CD4-positive, alpha-beta T cell (primary cell): ENCODE measurements at regions of chr5 and their contacts with region 1.

Region 1: DNA sequence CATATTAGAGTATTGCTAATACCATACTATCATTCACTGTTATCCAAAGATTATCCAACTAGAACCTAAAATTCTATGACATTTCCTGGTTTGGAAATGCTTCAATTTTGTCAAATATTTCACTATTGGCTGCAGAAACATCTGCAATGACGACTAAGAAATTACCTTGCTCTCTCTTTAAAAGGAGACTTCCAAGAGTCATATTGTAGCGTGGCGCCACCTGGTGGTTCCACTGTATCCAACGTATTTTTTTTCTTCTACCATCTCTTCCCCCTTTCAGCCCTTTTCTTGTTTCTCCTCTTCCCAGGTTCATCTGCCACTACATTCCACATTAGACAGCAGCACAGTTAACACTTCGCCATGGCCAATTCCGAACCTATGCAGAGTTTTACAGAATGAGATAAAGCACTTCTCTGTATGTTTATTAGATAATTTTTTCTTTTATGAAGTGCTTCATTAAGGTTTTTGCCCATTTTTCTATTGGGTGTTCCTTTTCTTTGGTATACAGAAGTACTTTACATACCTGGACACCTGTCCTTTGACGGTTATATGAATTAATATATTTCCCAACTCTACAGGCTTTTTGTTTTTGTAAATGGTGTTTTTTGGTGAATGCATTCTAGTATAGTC is 153.5 kb downstream of the CDC42SE2 start:
- DNase-seq: peak; percentile 73 to 93 (median 82)
- ATAC-seq: peak; percentile 30
- H3K4me3 ChIP-seq: no peak overlapping the region
- H3K4me3 Mint-ChIP-seq: peak overlapping the region; percentile 6
- H3K27ac ChIP-seq: no peak overlapping the region
- H3K27ac Mint-ChIP-seq: peak overlapping the region; percentile 70
- H3K4me1 ChIP-seq: peaks cover 18% of the 10 kb centered on the region
- H3K4me1 Mint-ChIP-seq: peaks cover 50% of the 10 kb centered on the region
- H3K27me3 ChIP-seq: no peaks in the 10 kb centered on the region
- H3K27me3 Mint-ChIP-seq: no peaks in the 10 kb centered on the region
- CTCF ChIP-seq: peak; percentile 92

Region 2: DNA sequence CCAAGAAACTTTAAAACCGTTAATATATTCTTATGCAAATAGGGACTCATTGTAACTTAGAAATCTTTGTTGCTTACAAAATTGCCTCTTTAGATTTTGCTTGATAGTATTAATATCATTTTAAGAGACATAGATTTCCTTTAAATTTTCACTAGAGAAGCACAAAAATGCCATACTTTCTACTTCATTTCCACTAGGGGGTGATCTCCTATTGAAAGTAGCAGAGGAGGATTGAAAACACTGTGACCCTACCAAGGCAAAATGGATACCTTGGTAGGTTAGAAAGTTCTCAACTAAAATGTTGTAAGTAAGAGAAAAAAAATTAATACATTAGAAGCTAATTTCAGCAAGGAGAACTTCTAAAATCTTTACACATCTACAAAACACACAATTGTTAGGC is 1308.2 kb before region 1 on chr5:
- CTCF ChIA-PET with region 1: no interaction called
- POLR2A ChIA-PET with region 1: no interaction called
- intact Hi-C with region 1: loop called (anchors 2 to 5 kb)
- DNase-seq: peak in 3 of 14 experiments; percentile 19 to 26 (median 19)
- ATAC-seq: no peak
- H3K4me3 ChIP-seq: no peak overlapping the region
- H3K4me3 Mint-ChIP-seq: no peak overlapping the region
- H3K27ac ChIP-seq: no peak overlapping the region
- H3K27ac Mint-ChIP-seq: no peak overlapping the region
- H3K4me1 ChIP-seq: no peaks in the 10 kb centered on the region
- H3K4me1 Mint-ChIP-seq: no peaks in the 10 kb centered on the region
- H3K27me3 ChIP-seq: no peaks in the 10 kb centered on the region
- H3K27me3 Mint-ChIP-seq: peaks cover 12% of the 10 kb centered on the region
- CTCF ChIP-seq: peak; percentile 45

Region 3: GRCh38 chr5:130871346-130872086 is 545.8 kb before region 1 on chr5:
- CTCF ChIA-PET with region 1: no interaction called
- POLR2A ChIA-PET with region 1: no interaction called
- intact Hi-C with region 1: loop called in 1 of 2 experiments (anchors 2 kb)
- DNase-seq: peak in 13 of 14 experiments; percentile 5 to 73 (median 22)
- ATAC-seq: no peak
- H3K4me3 ChIP-seq: no peak overlapping the region
- H3K4me3 Mint-ChIP-seq: no peak overlapping the region
- H3K27ac ChIP-seq: no peak overlapping the region
- H3K27ac Mint-ChIP-seq: no peak overlapping the region
- H3K4me1 ChIP-seq: no peaks in the 10 kb centered on the region
- H3K4me1 Mint-ChIP-seq: no peaks in the 10 kb centered on the region
- H3K27me3 ChIP-seq: no peaks in the 10 kb centered on the region
- H3K27me3 Mint-ChIP-seq: no peaks in the 10 kb centered on the region
- CTCF ChIP-seq: peak; percentile 77

Region 4: GRCh38 chr5:131165119-131165727 is 252.1 kb before region 1 on chr5 and contains the start of gene HINT1:
- CTCF ChIA-PET with region 1: interaction called, 4 read pairs
- POLR2A ChIA-PET with region 1: interaction called, 4 read pairs
- intact Hi-C with region 1: loop called (anchors 1 to 2 kb)
- DNase-seq: peak; percentile 81 to 97 (median 92)
- ATAC-seq: peak; percentile 84
- H3K4me3 ChIP-seq: peak within 1 kb of the TSS; percentile 86
- H3K4me3 Mint-ChIP-seq: peak within 1 kb of the TSS; percentile 97
- H3K27ac ChIP-seq: peak within 1 kb of the TSS; percentile 92 to 93
- H3K27ac Mint-ChIP-seq: peak within 1 kb of the TSS; percentile 88
- H3K4me1 ChIP-seq: peaks cover 28% of the 10 kb centered on the region
- H3K4me1 Mint-ChIP-seq: peaks cover 63% of the 10 kb centered on the region
- H3K27me3 ChIP-seq: no peaks in the 10 kb centered on the region
- H3K27me3 Mint-ChIP-seq: no peaks in the 10 kb centered on the region
- CTCF ChIP-seq: peak; percentile 37
- total RNA-seq, gene HINT1: 257 to 263 TPM

Region 5: GRCh38 chr5:131364507-131365050 is 52.8 kb before region 1 on chr5:
- CTCF ChIA-PET with region 1: no interaction called
- POLR2A ChIA-PET with region 1: interaction called, 4 read pairs
- intact Hi-C with region 1: loop called in 1 of 2 experiments (anchors 5 kb)
- DNase-seq: peak in 4 of 14 experiments; percentile 43 to 70 (median 44)
- ATAC-seq: peak; percentile 76
- H3K4me3 ChIP-seq: no peak overlapping the region
- H3K4me3 Mint-ChIP-seq: peak overlapping the region; percentile 63
- H3K27ac ChIP-seq: peak overlapping the region; percentile 32 to 61
- H3K27ac Mint-ChIP-seq: peak overlapping the region; percentile 81
- H3K4me1 ChIP-seq: peaks cover 41% of the 10 kb centered on the region
- H3K4me1 Mint-ChIP-seq: peaks cover 89% of the 10 kb centered on the region
- H3K27me3 ChIP-seq: no peaks in the 10 kb centered on the region
- H3K27me3 Mint-ChIP-seq: no peaks in the 10 kb centered on the region
- CTCF ChIP-seq: no peak

Region 6: DNA sequence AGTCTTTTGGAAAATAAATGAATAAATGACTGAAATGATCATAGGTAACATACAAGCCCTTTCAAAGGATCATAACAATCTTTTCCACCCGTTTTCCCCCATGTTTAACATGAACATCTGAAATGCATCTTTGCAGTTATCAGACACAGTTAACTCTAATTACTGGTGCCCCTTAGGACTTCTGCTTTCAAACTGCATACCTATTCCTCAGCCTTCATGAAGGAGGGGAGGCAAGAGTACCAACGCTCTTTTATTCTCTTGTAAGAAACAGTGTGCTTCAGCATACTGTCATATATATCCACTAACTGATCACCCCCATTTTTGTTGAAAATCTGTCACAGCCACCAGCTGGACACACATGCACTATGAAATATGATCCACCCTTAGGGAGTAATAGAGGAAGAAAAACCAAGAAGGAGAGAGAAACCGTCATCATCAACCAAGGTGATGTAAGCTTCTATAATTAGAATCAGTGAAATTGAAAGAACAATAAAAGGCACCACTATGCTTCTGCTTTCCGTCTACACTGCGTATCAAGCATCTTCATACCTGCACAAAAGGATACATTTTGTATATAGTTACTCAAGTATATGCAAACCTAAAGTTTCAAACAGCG is 119.0 kb after region 1 on chr5:
- CTCF ChIA-PET with region 1: no interaction called
- POLR2A ChIA-PET with region 1: no interaction called
- intact Hi-C with region 1: no loop called
- DNase-seq: peak in 3 of 14 experiments; percentile 62 to 77 (median 62)
- ATAC-seq: peak; percentile 48
- H3K4me3 ChIP-seq: no peak overlapping the region
- H3K4me3 Mint-ChIP-seq: peak overlapping the region; percentile 77
- H3K27ac ChIP-seq: peak overlapping the region; percentile 42 to 59
- H3K27ac Mint-ChIP-seq: peak overlapping the region; percentile 84
- H3K4me1 ChIP-seq: peaks cover 22% of the 10 kb centered on the region
- H3K4me1 Mint-ChIP-seq: peaks cover 86% of the 10 kb centered on the region
- H3K27me3 ChIP-seq: no peaks in the 10 kb centered on the region
- H3K27me3 Mint-ChIP-seq: no peaks in the 10 kb centered on the region
- CTCF ChIP-seq: no peak

Region 7: DNA sequence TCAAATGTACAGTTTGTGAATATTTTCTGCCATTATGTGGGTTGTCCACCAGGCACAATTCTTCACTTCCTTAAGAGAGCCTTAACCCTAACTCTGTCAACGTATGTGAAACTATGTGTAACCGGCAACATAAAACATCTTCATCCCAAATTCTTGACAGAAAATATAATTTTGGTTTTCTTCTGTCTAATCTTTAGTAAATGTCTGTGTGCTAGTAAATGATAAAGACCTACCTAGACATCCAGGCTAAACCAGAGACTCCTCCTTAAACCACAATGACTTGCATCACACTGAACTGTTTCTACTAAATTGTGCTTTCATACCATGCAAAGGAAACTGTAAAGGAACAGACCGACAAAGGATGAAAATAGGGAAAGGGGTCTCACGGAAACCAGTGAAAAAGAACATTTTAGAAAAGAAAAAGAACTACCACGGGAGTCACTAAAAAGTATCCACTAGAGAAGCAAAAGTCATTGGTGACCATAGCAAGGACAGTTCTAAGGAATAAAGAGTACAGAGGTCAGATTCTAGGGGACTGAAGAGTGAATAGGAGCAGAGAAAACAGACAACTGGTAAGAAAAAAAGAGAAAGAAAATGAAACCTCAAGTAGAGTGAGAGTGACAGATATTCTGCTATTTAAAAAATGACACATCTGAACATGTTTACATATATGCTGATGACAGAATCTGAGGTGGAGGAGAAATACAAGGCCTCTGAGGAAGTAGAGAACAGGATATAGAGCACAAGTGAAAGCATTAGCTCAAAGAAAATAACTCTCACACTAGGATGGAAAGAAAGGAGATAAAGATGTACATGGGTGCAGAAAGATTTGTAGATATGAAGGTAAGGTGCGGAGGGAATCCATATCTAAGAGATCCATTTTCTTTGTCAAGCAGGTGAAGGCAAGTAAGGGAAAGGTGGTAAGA is 330.1 kb after region 1 on chr5:
- CTCF ChIA-PET with region 1: no interaction called
- POLR2A ChIA-PET with region 1: no interaction called
- intact Hi-C with region 1: no loop called
- DNase-seq: peak in 3 of 14 experiments; percentile 37 to 47 (median 38)
- ATAC-seq: peak; percentile 86
- H3K4me3 ChIP-seq: no peak overlapping the region
- H3K4me3 Mint-ChIP-seq: peak overlapping the region; percentile 43
- H3K27ac ChIP-seq: peak overlapping the region in 1 of 2 donors; percentile 42
- H3K27ac Mint-ChIP-seq: peak overlapping the region; percentile 86
- H3K4me1 ChIP-seq: peaks cover 3% of the 10 kb centered on the region
- H3K4me1 Mint-ChIP-seq: peaks cover 46% of the 10 kb centered on the region
- H3K27me3 ChIP-seq: no peaks in the 10 kb centered on the region
- H3K27me3 Mint-ChIP-seq: no peaks in the 10 kb centered on the region
- CTCF ChIP-seq: no peak